Sciatic nerve (tissue), 2 donors: ENCODE measurements at regions of chr12 and their contacts with region 1.

Region 1: GRCh38 chr12:56189918-56190694 is 823 bp upstream of the SMARCC2 start:
- DNase-seq: peak; percentile 90
- ATAC-seq: peak; percentile 82

Region 2: GRCh38 chr12:56468216-56469006 is 278.3 kb after region 1 on chr12 and contains the start of gene SPRYD4:
- intact Hi-C with region 1: loop called (anchors 10 kb)
- DNase-seq: peak; percentile 95
- ATAC-seq: peak; percentile 99
- total RNA-seq, gene SPRYD4: 2.9 TPM